HEK293T (cell line): ENCODE measurements at regions of chr6 and their contacts with region 1.

Region 1: GRCh38 chr6:138115877-138116660 is 8.8 kb upstream of the PERP start:
- DNase-seq: peak; percentile 77

Region 2: DNA sequence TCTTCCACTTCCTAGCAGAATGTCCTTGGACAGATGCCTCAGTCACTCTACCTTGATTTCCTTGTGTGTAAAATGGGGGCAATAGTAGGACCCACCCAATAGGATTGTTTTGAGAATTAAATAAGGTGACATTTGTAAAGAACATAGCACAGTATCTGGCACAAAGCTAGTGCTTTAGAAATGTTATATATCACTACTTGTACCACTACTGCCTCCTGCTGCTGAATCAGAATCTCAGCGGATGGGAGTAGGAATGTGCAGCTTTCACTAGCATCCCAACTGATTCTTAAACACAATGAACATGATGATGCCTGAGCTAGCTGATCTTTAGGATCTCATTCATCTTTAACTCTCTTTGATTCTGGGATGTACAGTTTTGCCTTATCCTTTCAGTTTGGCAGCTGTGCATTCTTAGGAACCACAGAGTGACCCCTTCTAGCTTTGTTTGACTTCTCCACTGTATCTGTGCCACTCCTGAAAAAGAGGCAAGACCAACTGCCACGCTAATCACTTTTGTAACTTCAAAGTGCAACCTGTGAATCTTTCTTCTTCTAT is 95.0 kb after region 1 on chr6:
- CTCF ChIA-PET with region 1: interaction called, 10 read pairs
- POLR2A ChIA-PET with region 1: no interaction called
- DNase-seq: no peak